ENCODE measurements at regions of chr22 and their contacts with region 1.

Region 1: DNA sequence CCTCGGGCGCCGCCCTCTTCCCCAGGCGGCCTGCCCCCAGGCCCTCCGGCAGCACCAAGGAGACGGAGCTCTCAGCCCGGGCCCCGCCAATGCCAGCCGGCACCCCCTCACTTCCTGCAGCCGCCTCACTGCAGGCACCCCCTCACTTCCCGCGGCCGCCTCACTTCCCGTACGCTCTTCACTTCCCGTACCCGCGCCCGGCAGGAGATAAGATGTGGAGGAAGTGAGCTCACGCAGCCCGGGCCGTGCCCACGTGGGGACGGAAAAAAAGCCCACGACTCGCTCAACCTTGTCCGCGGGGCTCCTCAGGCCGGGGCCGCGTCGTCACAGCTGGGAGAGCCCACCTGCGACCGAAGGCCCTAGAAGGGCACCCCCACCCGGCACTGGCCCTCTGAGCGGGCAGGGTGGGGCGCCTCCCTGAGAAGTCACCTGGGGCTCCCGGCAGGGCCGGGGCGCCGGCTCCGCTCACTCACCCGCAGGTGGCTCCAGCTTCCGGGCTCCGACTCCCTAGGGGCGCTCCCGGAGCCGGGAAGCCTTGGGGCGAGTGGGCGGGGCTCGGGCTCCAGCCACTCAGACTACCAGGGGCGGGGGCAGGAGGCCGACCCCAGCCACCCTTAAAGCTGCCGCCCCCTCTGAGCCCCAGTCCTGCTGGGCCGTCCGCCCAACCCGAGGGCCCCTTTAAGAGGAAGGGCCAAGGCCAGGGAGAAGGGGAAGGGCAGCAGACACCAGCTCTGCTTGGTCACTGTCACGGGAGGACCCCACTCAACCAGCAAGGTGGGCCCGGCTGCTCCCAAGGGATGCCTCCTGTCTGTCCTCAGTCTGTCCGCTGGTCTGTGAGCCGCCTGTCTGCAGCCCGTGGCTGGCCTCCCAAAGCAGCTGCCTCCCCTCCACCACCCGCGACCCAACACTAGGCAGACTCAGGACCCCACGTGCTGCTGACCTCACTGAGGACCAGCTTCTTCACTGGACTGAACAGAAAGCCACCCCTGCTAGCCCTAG is 31.4 kb downstream of the PISD start:
- DNase-seq: peak; percentile 88 to 90 (median 90)
- ATAC-seq: peak; percentile 79
- H3K4me3 ChIP-seq: peak overlapping the region; percentile 82
- H3K27ac ChIP-seq: peak overlapping the region; percentile 87
- H3K4me1 ChIP-seq: peaks cover 41 to 53% of the 10 kb centered on the region in 2 experiments
- H3K27me3 ChIP-seq: no peaks in the 10 kb centered on the region
- CTCF ChIP-seq: 0 out of 6 replicates have a peak, but pooled peaks of 1 of the 3 experiments have one; percentile 8
- EP300 ChIP-seq: no peak
- POLR2A ChIP-seq: peak; percentile 74
- RAD21 ChIP-seq: no peak

Region 2: DNA sequence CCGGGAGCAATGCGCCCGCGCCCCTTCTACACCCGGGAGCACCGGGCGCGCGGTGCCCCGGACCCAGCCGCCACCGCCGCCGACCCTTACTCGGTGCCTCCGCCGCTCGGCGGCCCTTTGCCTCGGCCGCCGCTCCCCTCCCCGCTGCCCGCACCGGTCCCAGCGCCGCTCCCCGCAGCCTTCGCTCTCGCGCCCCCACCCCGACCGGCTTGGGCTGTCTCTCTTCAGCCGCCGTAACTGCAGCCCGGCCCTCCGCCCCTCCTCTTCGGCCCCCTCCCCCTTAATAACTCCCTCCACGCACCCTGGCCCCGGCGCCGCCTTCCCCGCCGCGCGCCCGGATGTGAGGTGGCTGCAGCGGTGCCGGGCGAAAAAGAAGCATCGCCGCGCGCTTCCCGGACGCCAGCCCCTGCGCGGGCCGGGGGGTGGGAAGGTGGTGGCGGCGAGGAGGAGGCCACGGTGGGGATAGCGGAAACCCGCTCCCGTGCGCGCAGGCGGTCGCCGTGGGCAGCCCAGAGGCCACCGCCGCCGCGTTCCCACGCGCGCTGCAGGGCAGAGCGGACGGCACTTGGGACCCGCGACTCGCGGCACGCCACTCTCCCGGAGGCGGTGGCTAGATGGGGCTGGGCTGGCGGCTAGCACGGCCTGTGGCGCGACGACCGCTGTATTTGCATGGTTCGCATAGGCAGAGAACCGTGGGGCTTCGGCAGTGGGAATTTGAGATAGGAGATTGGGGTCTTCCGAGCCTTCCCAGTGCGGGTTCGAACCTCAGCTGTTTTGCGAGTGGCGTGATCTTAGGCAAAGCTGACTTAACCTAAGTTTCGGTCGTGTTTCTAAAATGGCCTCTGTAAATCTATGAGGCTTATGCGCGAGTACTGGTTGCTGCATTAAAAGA is 140.8 kb before region 1 on chr22 and contains the start of gene EIF4ENIF1:
- CTCF ChIA-PET with region 1: interaction called, 3 read pairs
- POLR2A ChIA-PET with region 1: no interaction called
- in situ Hi-C with region 1: no loop called
- intact Hi-C with region 1: loop called (anchors 2 kb)
- DNase-seq: peak; percentile 86 to 90 (median 88)
- ATAC-seq: peak; percentile 81
- H3K4me3 ChIP-seq: peak within 1 kb of the TSS; percentile 73
- H3K27ac ChIP-seq: peak within 1 kb of the TSS; percentile 95
- H3K4me1 ChIP-seq: peaks cover 13 to 26% of the 10 kb centered on the region in 2 experiments; a peak in 4 of 5 replicates
- H3K27me3 ChIP-seq: no peaks in the 10 kb centered on the region
- CTCF ChIP-seq: no peak
- EP300 ChIP-seq: no peak
- POLR2A ChIP-seq: peak; percentile 75
- RAD21 ChIP-seq: no peak
- polyA plus RNA-seq, gene EIF4ENIF1: 2.5 to 4.1 TPM

Region 3: GRCh38 chr22:31561238-31561887 is 69.3 kb before region 1 on chr22:
- CTCF ChIA-PET with region 1: interaction called, 3 read pairs
- POLR2A ChIA-PET with region 1: interaction called, 5 read pairs
- in situ Hi-C with region 1: loop called (anchors 5 kb)
- intact Hi-C with region 1: loop called (anchors 1 kb)
- DNase-seq: peak; percentile 72 to 82 (median 72)
- ATAC-seq: peak; percentile 100
- H3K4me3 ChIP-seq: no peak overlapping the region
- H3K27ac ChIP-seq: no peak overlapping the region
- H3K4me1 ChIP-seq: peaks cover 0 to 3% of the 10 kb centered on the region in 2 experiments; a peak in 2 of 5 replicates
- H3K27me3 ChIP-seq: no peaks in the 10 kb centered on the region
- CTCF ChIP-seq: peak; percentile 83 to 87 (median 87)
- EP300 ChIP-seq: peak; percentile 11; the same call in 1 of the 2 replicates
- POLR2A ChIP-seq: no peak
- RAD21 ChIP-seq: peak; percentile 74 to 90

Region 4: DNA sequence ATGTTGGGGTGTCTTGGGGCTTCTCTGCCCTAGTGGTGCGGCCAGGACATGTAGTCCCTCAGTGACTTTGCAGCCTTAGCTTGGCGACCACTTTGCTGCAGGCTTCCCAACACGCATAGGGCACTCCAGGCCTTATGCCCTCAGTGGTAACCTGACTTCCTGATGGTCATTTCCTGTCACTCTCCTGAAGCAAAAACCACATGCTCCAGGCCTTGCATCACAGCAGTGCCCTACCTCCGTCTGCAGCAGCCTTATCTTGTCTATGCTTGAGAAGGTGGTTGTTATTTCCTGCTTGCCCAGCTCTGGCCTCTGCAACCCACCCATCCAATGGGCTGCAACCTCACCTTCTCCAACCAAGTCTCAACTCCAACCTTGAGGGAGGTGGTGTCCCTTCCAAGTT is 64.8 kb after region 1 on chr22:
- CTCF ChIA-PET with region 1: no interaction called
- POLR2A ChIA-PET with region 1: no interaction called
- in situ Hi-C with region 1: no loop called
- intact Hi-C with region 1: no loop called
- DNase-seq: no peak
- ATAC-seq: no peak
- H3K4me3 ChIP-seq: no peak overlapping the region
- H3K27ac ChIP-seq: no peak overlapping the region
- H3K4me1 ChIP-seq: no peaks in the 10 kb centered on the region
- H3K27me3 ChIP-seq: no peaks in the 10 kb centered on the region
- CTCF ChIP-seq: no peak
- EP300 ChIP-seq: no peak
- POLR2A ChIP-seq: no peak
- RAD21 ChIP-seq: no peak

Region 5: DNA sequence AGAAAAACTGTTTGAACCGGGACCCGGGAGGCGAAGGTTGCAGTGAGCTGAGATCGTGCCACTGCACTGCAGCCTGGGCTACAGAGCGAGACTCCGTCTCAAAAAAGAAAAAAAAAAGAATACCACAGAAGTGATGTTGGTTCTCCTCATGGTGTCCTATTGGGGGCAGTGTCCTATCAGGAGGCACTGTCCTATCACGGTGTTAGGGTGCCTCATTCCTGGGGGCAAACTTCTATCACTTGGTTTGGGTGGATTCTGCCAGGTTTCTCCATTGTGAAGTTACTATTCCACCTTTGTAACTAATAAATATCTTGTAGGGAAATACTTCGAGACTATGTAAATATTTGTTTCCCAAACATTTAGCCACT is 99.7 kb after region 1 on chr22:
- CTCF ChIA-PET with region 1: no interaction called
- POLR2A ChIA-PET with region 1: no interaction called
- in situ Hi-C with region 1: no loop called
- intact Hi-C with region 1: no loop called
- DNase-seq: peak in 3 of 4 experiments; percentile 19 to 31 (median 22)
- ATAC-seq: peak; percentile 84
- H3K4me3 ChIP-seq: no peak overlapping the region
- H3K27ac ChIP-seq: no peak overlapping the region
- H3K4me1 ChIP-seq: no peaks in the 10 kb centered on the region; a peak in 1 of 5 replicates
- H3K27me3 ChIP-seq: no peaks in the 10 kb centered on the region
- CTCF ChIP-seq: peak; percentile 30 to 47 (median 31); a peak in 3 of 6 replicates
- EP300 ChIP-seq: no peak
- POLR2A ChIP-seq: no peak
- RAD21 ChIP-seq: no peak

Measured in K562 (cell line).